ENCODE measurements at regions of chr9 and their contacts with region 1.

Region 1: GRCh38 chr9:34437006-34437925 is 21.1 kb downstream of the FAM219A start:
- DNase-seq: peak in 4 of 5 donors; percentile 38 to 48 (median 42)
- ATAC-seq: peak; percentile 68 to 89 (median 84)
- H3K4me3 ChIP-seq: no peak overlapping the region
- H3K27ac ChIP-seq: no peak overlapping the region
- H3K4me1 ChIP-seq: peaks cover 3 to 42% (median 28%) of the 10 kb centered on the region in 12 donors
- H3K27me3 ChIP-seq: no peaks in the 10 kb centered on the region
- CTCF ChIP-seq: peak; percentile 66 to 85 (median 79)
- POLR2A ChIP-seq: no peak

Region 2: GRCh38 chr9:34328987-34329832 is 108.1 kb before region 1 on chr9 and contains the starts of genes KIF24 and NUDT2:
- intact Hi-C with region 1: loop called in 1 of 10 experiments (anchors 10 kb)
- DNase-seq: peak; percentile 96 to 99 (median 98)
- ATAC-seq: peak; percentile 97 to 98 (median 98)
- H3K4me3 ChIP-seq: peak within 1 kb of the TSS; percentile 47 to 88 (median 80)
- H3K27ac ChIP-seq: peak within 1 kb of the TSS; percentile 88 to 96 (median 91)
- H3K4me1 ChIP-seq: peaks cover 0 to 35% (median 14%) of the 10 kb centered on the region in 12 donors
- H3K27me3 ChIP-seq: no peaks in the 10 kb centered on the region
- CTCF ChIP-seq: peak in 4 of 12 donors; percentile 7 to 33 (median 10)
- POLR2A ChIP-seq: peak in 1 of 2 donors; percentile 88
- total RNA-seq, gene KIF24: 0.25 to 1.6 (median 0.67) TPM
- total RNA-seq, gene NUDT2: 14.1 to 21.3 (median 17.2) TPM

Region 3: GRCh38 chr9:34603610-34604231 is 166.5 kb after region 1 on chr9:
- intact Hi-C with region 1: loop called in 4 of 10 experiments (anchors 10 kb)
- DNase-seq: peak; percentile 70 to 84 (median 78)
- ATAC-seq: peak; percentile 80 to 88 (median 86)
- H3K4me3 ChIP-seq: no peak overlapping the region
- H3K27ac ChIP-seq: no peak overlapping the region
- H3K4me1 ChIP-seq: peaks cover 0 to 5% (median 0%) of the 10 kb centered on the region in 12 donors
- H3K27me3 ChIP-seq: no peaks in the 10 kb centered on the region
- CTCF ChIP-seq: peak; percentile 83 to 95 (median 92)
- POLR2A ChIP-seq: no peak

Region 4: GRCh38 chr9:34710023-34710422 is 272.8 kb after region 1 on chr9 and contains the start of gene CCL21:
- intact Hi-C with region 1: no loop called
- DNase-seq: peak in 4 of 5 donors; percentile 78 to 87 (median 80)
- ATAC-seq: peak; percentile 86 to 95 (median 94)
- H3K4me3 ChIP-seq: no peak within 1 kb of the TSS
- H3K27ac ChIP-seq: peak within 1 kb of the TSS in 11 of 12 donors; percentile 34 to 86 (median 71)
- H3K4me1 ChIP-seq: peaks cover 0 to 21% (median 12%) of the 10 kb centered on the region in 12 donors
- H3K27me3 ChIP-seq: no peaks in the 10 kb centered on the region
- CTCF ChIP-seq: no peak
- POLR2A ChIP-seq: no peak
- total RNA-seq, gene CCL21: 1.3 to 156 (median 16.6) TPM

Measured in heart left ventricle (tissue), 16 donors.